Activated T-helper 1 cell treated with anti-CD3 and anti-CD28 coated beads, Interleukin-12 subunit alpha, Interleukin-12 subunit beta, Interleukin-2, Interleukin-4 antibody, amounts not matched to agents 30 ng/mL and 10 ng/mL and 1 ng/mL, durations not matched to agents 14 hours and 24 hours and 36 hours (primary cell): ENCODE measurements at regions of chr1 and their contacts with region 1.

Region 1: DNA sequence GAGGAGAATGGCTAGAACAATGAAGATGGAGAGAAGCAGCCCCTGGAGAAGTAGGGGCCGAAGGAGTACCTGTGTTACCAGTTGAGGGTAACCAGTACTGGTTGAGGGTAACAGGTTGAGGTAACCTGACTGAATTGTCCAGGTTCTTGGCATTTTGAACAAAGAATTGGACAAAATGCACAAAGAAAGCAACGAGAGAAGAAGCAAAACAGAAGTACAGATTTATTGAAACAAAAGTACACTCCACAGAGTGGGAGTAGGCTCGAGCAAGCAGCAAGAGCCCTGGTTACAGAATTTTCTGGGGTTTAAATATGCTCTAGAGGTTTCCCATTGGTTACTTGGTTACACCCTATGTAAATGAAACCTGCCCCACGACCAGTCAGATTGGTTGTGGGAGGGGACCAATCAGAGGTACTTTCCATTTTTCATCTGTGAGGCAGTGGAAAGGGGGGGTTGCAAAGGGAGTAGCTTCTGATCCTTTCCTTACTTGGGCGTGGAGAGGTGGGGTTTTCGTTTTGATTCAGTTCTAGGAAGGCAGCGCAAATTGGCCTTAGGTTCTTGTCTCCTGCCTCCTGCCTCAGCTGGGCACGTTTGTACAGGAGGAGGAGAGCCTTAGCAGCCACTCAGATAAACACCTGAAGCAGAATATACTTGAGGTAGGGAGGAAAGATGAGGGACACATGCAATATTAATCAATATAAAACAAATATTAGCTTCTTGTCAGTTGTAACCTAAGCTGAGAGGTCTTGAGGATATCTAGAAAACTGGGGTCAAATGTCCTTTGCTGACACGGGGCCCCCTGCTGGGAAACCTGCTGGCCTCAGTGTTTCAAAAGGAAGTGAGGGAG is 14.2 kb upstream of the LSM10 start:
- DNase-seq: peak; percentile 63
- H3K4me3 Mint-ChIP-seq: peak overlapping the region; percentile 43
- H3K27ac Mint-ChIP-seq: peak overlapping the region; percentile 84
- H3K4me1 Mint-ChIP-seq: peaks cover 19% of the 10 kb centered on the region
- H3K27me3 Mint-ChIP-seq: peaks cover 1% of the 10 kb centered on the region

Region 2: DNA sequence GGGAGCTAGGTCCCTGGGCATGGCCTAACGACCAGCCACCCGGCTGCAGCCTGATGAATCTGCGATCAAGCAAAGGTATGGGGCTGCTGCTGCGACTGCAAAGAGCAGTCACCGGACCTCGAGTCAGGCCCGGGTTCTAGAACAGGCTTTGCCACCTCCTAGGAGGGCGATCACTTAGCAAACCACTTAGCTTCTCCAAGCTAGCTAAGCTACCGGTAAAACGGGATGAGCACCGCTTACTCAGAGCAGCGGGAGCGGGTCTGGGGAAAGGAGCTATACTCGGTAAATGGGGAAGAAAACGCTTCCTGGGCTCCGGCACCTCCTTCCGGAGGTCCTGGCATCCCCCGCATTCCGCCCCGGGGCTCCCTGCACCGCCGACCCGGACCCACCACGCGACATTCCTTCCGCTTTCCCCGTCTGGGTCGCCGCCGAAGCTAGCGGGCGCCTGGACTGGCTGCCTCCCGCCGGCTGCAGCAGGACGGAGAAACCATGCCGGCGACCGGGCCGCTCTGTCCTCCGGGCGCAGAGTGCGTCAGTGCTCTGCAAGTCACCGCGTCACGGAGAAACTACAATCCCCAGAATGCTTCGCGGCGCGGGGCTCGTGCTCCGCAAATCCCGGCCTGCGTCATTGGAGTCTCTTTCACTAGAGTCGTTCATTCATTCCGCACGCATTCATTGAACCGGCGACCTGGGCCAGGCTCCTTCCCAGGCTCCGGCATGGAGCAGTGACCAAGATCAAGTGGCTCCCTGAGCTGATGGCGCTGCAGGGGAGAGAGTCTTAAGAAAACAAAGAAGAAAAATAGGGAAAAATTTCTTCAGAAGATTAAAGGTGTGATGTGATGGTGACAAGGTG is 14.3 kb before region 1 on chr1 and contains the start of gene LSM10:
- intact Hi-C with region 1: loop called (anchors 2 kb)
- DNase-seq: peak; percentile 88
- H3K4me3 Mint-ChIP-seq: peak within 1 kb of the TSS; percentile 97
- H3K27ac Mint-ChIP-seq: peak within 1 kb of the TSS; percentile 98
- H3K4me1 Mint-ChIP-seq: peaks cover 29% of the 10 kb centered on the region
- H3K27me3 Mint-ChIP-seq: no peaks in the 10 kb centered on the region
- total RNA-seq, gene LSM10: 57.5 and 63.8 TPM in 2 replicates